HCT116 (cell line): ENCODE measurements at regions of chr17 and their contacts with region 1.

Region 1: DNA sequence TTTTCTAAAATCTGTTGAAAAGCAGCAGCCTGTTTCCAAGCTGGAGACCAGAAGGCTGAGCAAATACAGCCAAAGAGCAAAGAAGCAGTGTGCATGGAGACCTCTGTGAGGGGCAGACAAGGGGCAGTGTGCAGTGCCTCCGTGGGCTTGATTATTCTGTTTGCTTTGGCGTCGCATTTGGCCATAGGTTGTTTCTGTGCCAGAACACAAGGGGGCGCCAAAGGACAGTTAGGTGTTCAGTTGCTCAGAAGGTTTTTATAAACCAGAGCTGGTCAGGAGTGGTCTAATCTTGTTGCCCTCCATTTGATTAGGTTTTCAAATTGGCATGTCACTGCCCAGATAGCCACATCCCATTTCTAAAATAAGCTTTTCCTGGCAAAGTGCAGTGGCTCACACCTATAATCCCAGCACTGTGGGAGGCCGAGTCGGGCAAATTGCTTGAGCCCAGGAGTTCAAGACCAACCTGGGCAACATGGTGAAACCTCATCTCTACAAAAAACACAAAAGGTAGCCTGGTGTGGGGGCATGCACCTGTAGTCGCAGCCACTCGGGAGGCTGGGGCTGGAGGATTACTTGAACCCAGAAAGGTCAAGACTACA is 10.6 kb downstream of the MYH3 start:
- DNase-seq: peak; percentile 48
- ATAC-seq: peak; percentile 78
- H3K4me3 ChIP-seq: no peak overlapping the region
- H3K27ac ChIP-seq: no peak overlapping the region
- H3K4me1 ChIP-seq: no peaks in the 10 kb centered on the region
- H3K27me3 ChIP-seq: no peaks in the 10 kb centered on the region
- CTCF ChIP-seq: peak; percentile 55 to 89 (median 86); a peak in 5 of 6 replicates
- POLR2A ChIP-seq: no peak
- RAD21 ChIP-seq: peak; percentile 69

Region 2: DNA sequence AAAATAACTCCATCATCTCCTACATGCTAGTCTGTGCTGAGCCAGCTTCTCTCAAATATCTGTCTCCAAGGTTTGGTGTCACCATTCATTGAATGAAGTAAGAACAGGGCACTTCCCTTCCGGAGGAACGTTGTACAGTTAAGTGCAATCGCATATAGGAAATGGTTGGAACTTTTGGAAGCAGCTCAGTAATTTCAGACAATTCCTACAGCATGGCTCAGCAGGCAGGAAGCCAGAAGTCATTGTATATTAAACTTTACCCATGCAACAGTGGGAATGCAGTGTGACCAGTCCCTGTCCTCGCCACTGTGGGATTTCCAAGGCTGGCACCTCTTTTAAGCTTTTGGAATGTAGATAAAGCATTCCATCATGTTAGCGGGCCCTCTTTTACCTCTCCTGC is 45.9 kb before region 1 on chr17:
- CTCF ChIA-PET with region 1: no interaction called
- POLR2A ChIA-PET with region 1: no interaction called
- RAD21 ChIA-PET with region 1: no interaction called
- intact Hi-C with region 1: no loop called
- DNase-seq: no peak
- ATAC-seq: no peak
- H3K4me3 ChIP-seq: no peak overlapping the region
- H3K27ac ChIP-seq: no peak overlapping the region
- H3K4me1 ChIP-seq: no peaks in the 10 kb centered on the region
- H3K27me3 ChIP-seq: peaks cover 46% of the 10 kb centered on the region
- CTCF ChIP-seq: no peak
- POLR2A ChIP-seq: no peak
- RAD21 ChIP-seq: no peak

Region 3: DNA sequence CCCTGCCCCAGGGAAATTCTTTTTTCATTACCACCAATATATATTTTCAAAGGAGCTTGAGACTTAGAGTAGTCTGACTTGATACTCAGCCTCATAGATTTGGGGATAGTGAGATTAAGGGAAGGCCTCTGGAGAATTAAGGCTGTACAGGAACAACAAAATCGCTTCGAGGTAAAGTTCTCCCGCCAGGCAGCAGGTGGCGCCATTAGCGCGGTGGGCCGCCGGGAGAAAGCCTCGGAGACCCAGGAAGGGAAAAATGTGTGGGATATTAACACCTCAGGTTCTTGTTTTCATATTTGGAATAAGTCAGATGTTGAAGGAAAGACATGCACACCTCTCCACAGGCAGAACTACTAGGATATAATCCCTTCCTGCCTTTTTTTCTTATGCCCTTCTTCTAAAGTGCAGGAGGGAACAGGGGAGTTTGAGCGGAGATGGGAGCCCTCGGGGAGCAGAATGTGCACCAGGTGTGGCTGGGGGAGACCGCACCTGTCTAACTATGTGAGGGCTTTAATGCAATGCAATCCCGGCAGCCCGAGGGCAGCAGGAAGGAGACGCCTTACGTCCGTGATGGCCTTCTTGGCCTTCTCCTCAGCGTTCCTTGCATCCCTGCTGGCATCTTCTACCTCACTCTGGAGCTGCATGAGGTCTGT is 15.3 kb before region 1 on chr17:
- CTCF ChIA-PET with region 1: interaction called, 16 read pairs
- POLR2A ChIA-PET with region 1: no interaction called
- RAD21 ChIA-PET with region 1: no interaction called
- intact Hi-C with region 1: no loop called
- DNase-seq: no peak
- ATAC-seq: peak; percentile 90
- H3K4me3 ChIP-seq: no peak overlapping the region
- H3K27ac ChIP-seq: no peak overlapping the region
- H3K4me1 ChIP-seq: no peaks in the 10 kb centered on the region
- H3K27me3 ChIP-seq: no peaks in the 10 kb centered on the region
- CTCF ChIP-seq: peak; percentile 34 to 95 (median 94); a peak in 5 of 6 replicates
- POLR2A ChIP-seq: no peak
- RAD21 ChIP-seq: peak; percentile 57

Region 4: GRCh38 chr17:10737168-10737622 is 90.7 kb after region 1 on chr17:
- CTCF ChIA-PET with region 1: interaction called, 13 read pairs
- POLR2A ChIA-PET with region 1: no interaction called
- RAD21 ChIA-PET with region 1: no interaction called
- intact Hi-C with region 1: no loop called
- DNase-seq: peak; percentile 39
- ATAC-seq: peak; percentile 94
- H3K4me3 ChIP-seq: no peak overlapping the region
- H3K27ac ChIP-seq: no peak overlapping the region
- H3K4me1 ChIP-seq: no peaks in the 10 kb centered on the region
- H3K27me3 ChIP-seq: peaks cover 11% of the 10 kb centered on the region; the same call in 1 of the 2 replicates
- CTCF ChIP-seq: peak; percentile 58 to 87 (median 74); a peak in 5 of 6 replicates
- POLR2A ChIP-seq: no peak
- RAD21 ChIP-seq: peak; percentile 77